Activated CD4-positive, alpha-beta memory T cell treated with anti-CD3 and anti-CD28 coated beads, Interleukin-2, amount 10 ng/mL, durations not matched to agents 7 days and 5 days (primary cell): ENCODE measurements at regions of chr2 and their contacts with region 1.

Region 1: DNA sequence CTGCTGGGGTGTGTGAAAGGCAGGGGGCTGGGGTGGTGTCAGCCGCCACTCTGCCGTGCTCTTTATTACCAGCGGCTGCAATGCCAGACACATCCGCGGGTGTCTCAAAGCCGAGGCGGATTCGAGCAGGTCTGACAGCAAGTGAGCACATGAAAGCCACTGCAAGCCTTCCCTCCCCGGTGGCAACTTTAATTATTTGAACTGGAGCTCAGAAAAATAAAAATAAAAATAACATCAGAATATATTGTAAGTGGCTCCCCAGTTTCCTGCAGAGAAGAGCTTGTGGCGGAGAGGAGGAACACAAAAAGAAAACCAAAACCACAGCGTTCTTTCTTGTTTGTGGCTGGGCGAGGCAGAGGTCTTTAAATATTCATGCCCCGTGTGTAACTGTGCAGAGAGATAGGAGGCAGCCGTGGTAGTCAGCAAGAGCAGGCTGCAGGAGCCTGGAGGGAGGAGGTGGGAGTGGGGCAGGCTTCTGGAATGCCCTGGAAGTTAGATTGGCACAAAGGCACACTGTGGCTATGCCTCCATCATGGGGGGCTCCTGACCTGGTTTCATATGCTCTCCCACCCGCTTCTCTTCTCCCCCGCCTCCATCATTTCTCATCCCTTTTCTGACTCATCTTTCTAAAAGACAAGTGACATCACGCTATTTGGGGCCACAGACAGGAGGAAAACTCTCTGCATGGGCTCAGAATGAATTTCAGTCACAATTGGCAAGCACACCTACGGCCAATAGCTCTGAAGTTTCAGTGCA is 199.8 kb downstream of the CLIP4 start:
- DNase-seq: peak; percentile 75
- H3K4me3 Mint-ChIP-seq: peak overlapping the region; percentile 66
- H3K27ac Mint-ChIP-seq: peak overlapping the region; percentile 88
- H3K4me1 Mint-ChIP-seq: peaks cover 39% of the 10 kb centered on the region
- H3K27me3 Mint-ChIP-seq: peaks cover 12% of the 10 kb centered on the region

Region 2: DNA sequence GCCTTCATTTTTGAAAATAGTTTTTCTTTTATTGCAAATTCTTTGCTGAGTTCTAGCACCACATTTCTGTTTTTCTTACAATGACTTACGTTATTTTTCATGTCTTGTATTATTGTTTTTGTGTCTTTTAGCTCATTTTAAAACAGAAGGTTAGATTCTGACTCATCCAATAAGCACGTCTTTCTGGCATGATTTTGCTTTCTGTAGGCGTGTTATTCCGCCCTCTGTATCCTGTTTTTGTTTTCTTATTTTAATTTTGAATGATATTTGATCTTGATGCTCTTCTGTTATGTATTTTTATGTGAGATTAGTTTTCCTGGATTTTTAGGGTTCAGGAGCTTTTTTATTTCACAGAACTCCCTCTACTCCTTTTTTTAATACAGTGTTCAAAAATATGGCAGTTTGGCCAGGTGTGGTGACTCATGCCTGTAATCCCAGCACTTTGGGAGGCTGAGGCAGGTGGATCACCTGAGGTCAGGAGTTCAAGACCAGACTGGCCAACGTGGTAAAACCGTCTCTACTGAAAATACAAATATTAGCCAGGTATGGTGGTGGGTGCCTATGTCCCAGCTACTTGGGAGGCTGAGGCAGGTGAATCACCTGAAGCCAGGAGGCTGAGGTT is 54.7 kb before region 1 on chr2:
- CTCF ChIA-PET with region 1: no interaction called
- POLR2A ChIA-PET with region 1: no interaction called
- DNase-seq: no peak
- H3K4me3 Mint-ChIP-seq: no peak overlapping the region
- H3K27ac Mint-ChIP-seq: no peak overlapping the region
- H3K4me1 Mint-ChIP-seq: no peaks in the 10 kb centered on the region
- H3K27me3 Mint-ChIP-seq: peaks cover 19% of the 10 kb centered on the region

Region 3: DNA sequence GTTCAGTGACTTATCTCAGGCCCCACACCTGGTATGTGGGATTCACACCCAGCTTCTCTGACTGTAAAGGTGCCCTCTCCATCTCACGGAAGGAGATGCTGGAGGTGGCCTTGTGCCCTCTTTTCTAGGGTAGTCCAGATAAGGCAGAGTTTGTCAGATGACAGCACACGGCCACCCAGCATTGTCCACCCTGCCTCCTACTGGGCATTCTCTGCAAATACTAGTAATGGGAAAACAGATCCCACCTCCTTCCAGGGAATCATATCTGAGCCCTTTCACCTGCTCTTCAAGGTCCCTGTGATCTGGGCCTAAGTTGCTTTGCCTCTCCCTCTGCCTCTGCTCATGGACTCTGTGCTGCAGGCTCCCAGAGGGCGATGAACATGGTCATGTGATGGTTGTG is 14.9 kb after region 1 on chr2:
- CTCF ChIA-PET with region 1: interaction called, 23 read pairs
- POLR2A ChIA-PET with region 1: interaction called, 9 read pairs
- DNase-seq: no peak
- H3K4me3 Mint-ChIP-seq: no peak overlapping the region
- H3K27ac Mint-ChIP-seq: no peak overlapping the region
- H3K4me1 Mint-ChIP-seq: peaks cover 15% of the 10 kb centered on the region
- H3K27me3 Mint-ChIP-seq: peaks cover 14% of the 10 kb centered on the region